ENCODE measurements at regions of chr9 and their contacts with region 1.

Region 1: GRCh38 chr9:88578121-88579054 is 43.4 kb downstream of the NXNL2 start:
- DNase-seq: peak; percentile 87
- H3K4me3 ChIP-seq: no peak overlapping the region
- H3K27ac ChIP-seq: no peak overlapping the region
- H3K4me1 ChIP-seq: no peaks in the 10 kb centered on the region
- H3K27me3 ChIP-seq: no peaks in the 10 kb centered on the region
- CTCF ChIP-seq: peak; percentile 97

Region 2: DNA sequence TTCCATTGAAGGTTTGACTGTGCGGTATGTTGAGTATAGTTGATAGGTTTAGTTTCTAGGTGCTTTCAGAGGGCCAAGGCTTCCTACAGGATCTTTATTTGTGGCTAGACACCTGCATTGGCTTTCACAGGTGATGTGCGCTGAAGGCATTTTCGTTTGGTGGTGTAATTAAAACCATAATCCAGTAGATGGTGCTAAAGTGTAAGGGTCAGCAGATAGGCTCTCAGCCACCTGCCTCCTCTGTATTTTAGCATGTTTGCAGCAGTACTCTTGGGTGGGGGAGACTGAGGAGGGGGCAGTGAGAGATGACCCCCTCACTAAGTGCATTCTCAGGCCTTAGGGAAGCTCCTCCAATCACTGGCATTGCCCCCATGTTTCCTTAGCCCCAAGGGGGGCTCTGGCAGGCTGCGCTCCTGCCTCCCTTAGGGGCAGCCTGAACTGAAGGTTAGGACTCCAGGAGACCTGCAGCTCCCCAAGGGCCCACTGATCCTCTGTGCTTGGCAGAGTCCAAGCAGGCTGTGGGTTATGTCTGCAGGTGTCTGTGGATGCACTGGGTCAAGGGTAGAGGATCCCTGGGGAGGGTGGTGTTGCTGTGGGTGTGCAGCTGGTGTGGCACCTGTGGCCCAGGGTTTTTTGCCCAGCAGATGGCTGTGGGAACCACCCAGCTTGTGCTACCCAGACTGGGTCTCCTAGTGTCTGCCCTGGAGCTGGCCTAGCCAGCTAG is 627.5 kb before region 1 on chr9:
- intact Hi-C with region 1: loop called (anchors 5 kb)
- DNase-seq: no peak
- H3K4me3 ChIP-seq: no peak overlapping the region
- H3K27ac ChIP-seq: no peak overlapping the region
- H3K4me1 ChIP-seq: no peaks in the 10 kb centered on the region
- H3K27me3 ChIP-seq: no peaks in the 10 kb centered on the region
- CTCF ChIP-seq: peak; percentile 63

Region 3: DNA sequence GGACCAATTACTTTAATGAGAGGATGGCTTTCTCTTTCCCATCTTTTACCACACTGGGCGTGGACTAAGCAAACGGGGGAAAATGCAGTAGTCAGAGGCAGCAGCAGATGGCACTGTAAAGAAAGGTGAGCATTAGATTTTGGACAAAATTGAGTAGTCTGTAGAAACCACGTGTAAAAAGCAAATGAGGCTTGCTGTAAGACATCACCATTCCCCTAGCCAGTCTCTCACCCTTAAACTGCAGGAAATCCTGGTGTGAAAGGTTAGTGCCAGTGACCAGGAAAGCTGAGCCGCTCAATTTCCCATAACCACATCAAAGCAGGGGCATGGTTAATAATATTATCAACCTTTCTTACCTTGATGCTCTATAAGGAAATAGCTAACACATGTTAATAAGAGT is 471.9 kb before region 1 on chr9:
- intact Hi-C with region 1: loop called (anchors 5 kb)
- DNase-seq: peak; percentile 55
- H3K4me3 ChIP-seq: no peak overlapping the region
- H3K27ac ChIP-seq: no peak overlapping the region
- H3K4me1 ChIP-seq: no peaks in the 10 kb centered on the region
- H3K27me3 ChIP-seq: no peaks in the 10 kb centered on the region
- CTCF ChIP-seq: peak; percentile 67

Region 4: GRCh38 chr9:88310310-88310995 is 267.9 kb before region 1 on chr9:
- intact Hi-C with region 1: loop called (anchors 10 kb)
- DNase-seq: no peak
- H3K4me3 ChIP-seq: no peak overlapping the region
- H3K27ac ChIP-seq: no peak overlapping the region
- H3K4me1 ChIP-seq: no peaks in the 10 kb centered on the region
- H3K27me3 ChIP-seq: no peaks in the 10 kb centered on the region
- CTCF ChIP-seq: no peak

Region 5: GRCh38 chr9:88399966-88400365 is 178.4 kb before region 1 on chr9:
- intact Hi-C with region 1: loop called (anchors 10 kb)
- DNase-seq: no peak
- H3K4me3 ChIP-seq: no peak overlapping the region
- H3K27ac ChIP-seq: no peak overlapping the region
- H3K4me1 ChIP-seq: no peaks in the 10 kb centered on the region
- H3K27me3 ChIP-seq: no peaks in the 10 kb centered on the region
- CTCF ChIP-seq: no peak

Region 6: GRCh38 chr9:88614359-88614758 is 36.0 kb after region 1 on chr9:
- intact Hi-C with region 1: no loop called
- DNase-seq: no peak
- H3K4me3 ChIP-seq: no peak overlapping the region
- H3K27ac ChIP-seq: no peak overlapping the region
- H3K4me1 ChIP-seq: no peaks in the 10 kb centered on the region
- H3K27me3 ChIP-seq: no peaks in the 10 kb centered on the region
- CTCF ChIP-seq: no peak

Region 7: GRCh38 chr9:88641456-88642240 is 63.3 kb after region 1 on chr9:
- intact Hi-C with region 1: no loop called
- DNase-seq: no peak
- H3K4me3 ChIP-seq: no peak overlapping the region
- H3K27ac ChIP-seq: no peak overlapping the region
- H3K4me1 ChIP-seq: no peaks in the 10 kb centered on the region
- H3K27me3 ChIP-seq: no peaks in the 10 kb centered on the region
- CTCF ChIP-seq: no peak

Measured in colonic mucosa (tissue), 4 donors.